ENCODE measurements at regions of chr2 and their contacts with region 1.

Region 1: DNA sequence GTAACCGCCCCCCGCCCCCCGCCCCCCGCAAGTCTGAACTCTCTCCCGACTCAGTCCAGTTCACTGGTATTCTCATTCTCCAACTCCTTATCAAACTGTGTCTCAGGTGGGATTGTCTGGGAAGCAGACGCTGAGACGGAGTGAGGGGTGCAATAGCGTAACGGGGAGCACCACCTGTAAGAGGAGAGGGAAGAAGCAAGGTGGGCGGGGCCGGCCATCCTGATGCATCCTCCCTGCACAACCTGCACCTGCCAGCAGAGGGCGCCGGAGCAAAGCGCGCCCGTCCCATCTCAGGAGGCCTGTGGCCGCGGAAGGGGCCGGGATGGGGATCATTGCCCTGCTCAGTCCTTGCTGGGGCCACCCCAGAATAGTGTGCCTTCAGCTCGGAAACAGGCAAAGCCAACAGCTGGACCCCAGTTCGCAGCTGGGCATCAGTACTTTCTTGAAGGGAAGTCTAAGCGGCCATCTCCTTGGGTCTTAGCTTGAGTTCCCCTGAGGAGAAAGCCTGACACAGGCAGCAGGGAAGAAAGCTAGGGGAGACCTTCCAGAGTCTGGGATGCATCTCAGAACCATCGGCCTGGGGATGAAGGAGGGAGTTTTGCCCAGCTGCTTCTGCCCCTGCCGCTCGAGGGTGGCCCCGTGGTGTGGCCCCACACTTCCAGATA is 208.0 kb downstream of the TFCP2L1 start:
- DNase-seq: no peak
- H3K4me3 ChIP-seq: no peak overlapping the region
- H3K27ac ChIP-seq: no peak overlapping the region
- H3K4me1 ChIP-seq: peaks cover 9% of the 10 kb centered on the region
- H3K27me3 ChIP-seq: peaks cover 4% of the 10 kb centered on the region
- CTCF ChIP-seq: peak; percentile 27 to 69 (median 33)
- POLR2A ChIP-seq: no peak

Region 2: DNA sequence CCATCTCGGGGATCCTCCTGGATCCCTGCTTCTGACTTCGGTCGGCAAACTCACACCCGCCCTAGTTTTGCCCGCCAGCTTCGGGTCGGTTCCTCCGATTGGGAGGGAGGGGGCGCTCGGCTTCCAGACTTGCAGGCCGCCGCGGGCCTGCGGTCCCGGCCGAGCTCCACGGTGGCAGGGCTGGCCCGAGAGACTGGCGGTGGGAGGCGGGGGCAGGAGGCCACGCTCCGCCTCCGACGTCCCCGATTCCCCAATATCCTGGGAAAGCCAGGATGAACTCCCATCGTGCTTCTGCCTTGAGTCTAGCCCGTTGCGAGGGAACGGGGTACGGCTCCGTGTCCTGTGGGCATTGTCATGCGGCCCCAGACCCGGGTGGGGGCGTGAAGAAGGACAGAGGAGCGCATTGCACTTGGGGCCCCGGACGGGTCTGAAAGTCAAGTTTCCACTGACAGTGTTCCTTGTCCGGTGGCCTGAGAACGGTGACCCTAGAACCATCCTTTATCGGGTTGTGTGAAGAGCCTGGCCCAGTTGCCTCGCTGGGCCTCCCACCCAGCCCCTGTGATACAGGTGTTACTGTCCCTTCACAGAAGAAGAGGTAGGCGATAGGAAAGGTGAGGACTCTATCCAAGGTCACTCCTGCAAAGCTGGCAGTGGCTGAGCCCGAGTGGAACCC is 733.4 kb before region 1 on chr2:
- intact Hi-C with region 1: loop called (anchors 10 kb)
- DNase-seq: no peak
- H3K4me3 ChIP-seq: peak overlapping the region; percentile 61 to 76
- H3K27ac ChIP-seq: peak overlapping the region; percentile 86
- H3K4me1 ChIP-seq: peaks cover 40% of the 10 kb centered on the region
- H3K27me3 ChIP-seq: no peaks in the 10 kb centered on the region
- CTCF ChIP-seq: peak; percentile 62 to 80 (median 80)
- POLR2A ChIP-seq: no peak

Region 3: GRCh38 chr2:120697471-120697870 is 379.5 kb before region 1 on chr2:
- intact Hi-C with region 1: loop called (anchors 2 kb)
- DNase-seq: no peak
- H3K4me3 ChIP-seq: no peak overlapping the region
- H3K27ac ChIP-seq: no peak overlapping the region
- H3K4me1 ChIP-seq: no peaks in the 10 kb centered on the region
- H3K27me3 ChIP-seq: no peaks in the 10 kb centered on the region
- CTCF ChIP-seq: no peak
- POLR2A ChIP-seq: no peak

Region 4: DNA sequence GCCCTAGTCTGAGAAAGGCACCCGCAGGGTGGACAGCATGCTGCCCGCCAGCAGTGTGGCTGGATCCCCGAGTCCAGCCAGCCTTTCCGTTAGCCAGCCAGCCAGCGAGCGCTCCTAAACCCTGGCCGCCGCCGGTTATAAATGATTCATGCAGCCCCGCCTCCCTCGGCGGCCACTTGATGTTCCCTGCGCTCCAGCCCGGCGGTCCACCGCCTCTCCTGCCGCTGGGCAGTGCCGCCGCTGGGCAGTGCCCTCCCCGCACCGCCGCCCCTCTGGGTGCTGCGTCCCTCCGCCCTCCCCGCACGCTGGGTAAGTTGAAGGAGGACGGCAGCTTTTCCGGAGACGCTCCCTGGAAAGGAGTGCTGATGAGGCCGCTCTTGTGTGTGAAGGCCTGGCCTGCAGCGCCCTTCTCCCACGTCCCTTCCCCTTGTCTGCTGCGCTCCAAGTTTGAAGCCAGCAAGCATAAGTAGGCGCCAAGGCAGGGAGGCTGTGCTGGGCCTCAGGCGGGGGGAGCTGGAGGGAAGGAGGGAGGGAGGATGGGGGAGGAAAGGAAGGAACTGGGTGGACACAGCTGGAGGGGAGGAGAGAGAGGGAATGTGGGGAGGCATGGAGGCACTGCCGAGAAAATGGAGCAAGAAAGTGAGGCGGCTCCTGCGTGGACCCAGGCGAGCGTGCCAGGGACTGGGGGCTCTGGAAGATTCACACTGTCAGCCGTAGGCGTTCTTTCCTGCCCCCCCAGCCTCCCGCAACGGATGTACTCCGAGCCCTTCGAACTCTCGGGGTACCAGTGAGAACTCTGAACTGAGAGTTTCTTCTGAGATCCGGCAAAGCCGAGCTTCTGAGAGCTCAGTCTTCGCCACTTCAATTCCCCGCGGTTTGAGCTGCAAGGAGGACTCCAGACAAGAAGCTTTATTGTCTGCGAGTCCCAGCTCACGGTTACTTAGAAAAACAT is 209.5 kb before region 1 on chr2:
- intact Hi-C with region 1: loop called (anchors 10 kb)
- DNase-seq: no peak
- H3K4me3 ChIP-seq: peak overlapping the region; percentile 38 to 49
- H3K27ac ChIP-seq: peak overlapping the region; percentile 85
- H3K4me1 ChIP-seq: peaks cover 50% of the 10 kb centered on the region
- H3K27me3 ChIP-seq: no peaks in the 10 kb centered on the region
- CTCF ChIP-seq: no peak
- POLR2A ChIP-seq: no peak

Measured in vagina (tissue), 2 donors.